PC-9 (cell line): ENCODE measurements at regions of chr22 and their contacts with region 1.

Region 1: DNA sequence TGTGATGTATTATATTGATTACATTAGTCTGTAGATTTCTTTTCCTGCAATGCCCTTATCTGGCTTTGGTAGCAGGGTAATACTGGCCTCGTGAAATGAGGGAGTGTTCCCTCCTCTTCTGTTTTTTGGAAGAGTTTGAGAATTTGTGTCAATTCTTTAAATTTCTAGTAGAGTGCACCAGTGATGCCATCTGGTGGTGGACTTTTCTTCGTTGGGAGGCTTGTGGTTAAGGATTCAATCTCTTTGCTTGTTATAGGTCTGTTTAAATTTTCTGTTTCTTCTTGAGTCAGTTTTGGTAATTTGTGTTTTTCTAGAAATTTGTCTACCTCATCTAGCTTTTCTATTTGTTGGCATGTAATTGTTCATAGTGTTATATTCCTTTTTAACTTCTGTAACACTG is 18.9 kb downstream of the SHANK3 start:
- DNase-seq: peak in 1 of 2 experiments; percentile 33
- H3K4me3 ChIP-seq: no peak overlapping the region
- H3K27ac ChIP-seq: no peak overlapping the region
- H3K4me1 ChIP-seq: no peaks in the 10 kb centered on the region
- H3K27me3 ChIP-seq: no peaks in the 10 kb centered on the region
- CTCF ChIP-seq: peak; percentile 89

Region 2: GRCh38 chr22:49235463-49236300 is 1455.8 kb before region 1 on chr22:
- CTCF ChIA-PET with region 1: no interaction called
- POLR2A ChIA-PET with region 1: no interaction called
- intact Hi-C with region 1: no loop called
- DNase-seq: no peak
- H3K4me3 ChIP-seq: no peak overlapping the region
- H3K27ac ChIP-seq: no peak overlapping the region
- H3K4me1 ChIP-seq: no peaks in the 10 kb centered on the region
- H3K27me3 ChIP-seq: peaks cover 93% of the 10 kb centered on the region
- CTCF ChIP-seq: no peak

Region 3: DNA sequence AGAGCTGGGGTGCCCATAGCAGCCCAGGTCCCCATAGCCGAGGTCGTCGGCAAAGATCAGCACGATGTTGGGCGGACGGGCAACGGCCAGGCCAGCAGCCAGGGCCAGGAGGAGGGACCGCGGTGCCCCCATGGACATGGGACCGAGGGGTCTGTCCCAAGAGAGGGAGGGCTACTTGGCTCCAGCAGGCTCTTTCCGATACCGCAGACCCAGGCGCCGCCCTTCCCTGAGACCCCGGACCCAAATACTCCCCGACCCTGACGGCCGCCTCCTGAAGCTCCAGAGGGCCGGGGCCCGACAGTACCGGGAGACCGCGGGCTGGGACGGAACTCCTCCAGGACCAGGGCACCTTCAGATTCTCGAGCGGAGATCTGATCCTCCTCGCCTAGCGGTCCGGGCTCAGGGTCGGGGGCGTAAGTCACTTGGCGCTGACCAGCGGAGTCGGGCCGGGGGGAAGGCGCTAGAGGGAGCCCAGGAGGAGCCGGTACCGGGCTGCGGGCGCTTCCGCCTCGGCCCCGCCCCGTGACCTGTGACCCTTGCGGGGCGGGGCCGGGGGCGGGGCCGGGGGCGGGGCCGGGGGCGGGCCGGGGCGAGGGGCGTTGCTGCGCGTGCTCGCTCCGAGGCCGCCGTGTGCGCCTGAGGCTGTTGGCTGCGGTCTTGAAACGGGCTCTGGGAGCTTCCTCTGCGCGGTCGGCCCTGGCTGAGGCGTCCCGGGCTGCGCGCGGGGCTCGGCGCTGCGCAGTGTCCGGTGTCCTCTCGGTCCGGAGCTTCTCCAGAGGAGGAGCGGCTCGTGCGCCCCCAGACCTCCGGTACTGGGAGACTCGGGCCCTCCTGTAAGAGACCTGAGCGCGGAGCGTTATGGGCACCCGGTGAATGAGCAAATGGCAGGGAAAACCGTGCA is 63.6 kb before region 1 on chr22 and contains the start of gene ARSA:
- CTCF ChIA-PET with region 1: no interaction called
- POLR2A ChIA-PET with region 1: no interaction called
- intact Hi-C with region 1: loop called (anchors 1 kb)
- DNase-seq: peak; percentile 76 to 82
- H3K4me3 ChIP-seq: peak within 1 kb of the TSS; percentile 99
- H3K27ac ChIP-seq: no peak within 1 kb of the TSS
- H3K4me1 ChIP-seq: peaks cover 14% of the 10 kb centered on the region
- H3K27me3 ChIP-seq: no peaks in the 10 kb centered on the region
- CTCF ChIP-seq: peak; percentile 62; the same call in 1 of the 2 replicates
- total RNA-seq, gene ARSA: 16.6 and 23.7 TPM in 2 replicates